Endothelial cell of umbilical vein (primary cell): ENCODE measurements at regions of chr3 and their contacts with region 1.

Region 1: DNA sequence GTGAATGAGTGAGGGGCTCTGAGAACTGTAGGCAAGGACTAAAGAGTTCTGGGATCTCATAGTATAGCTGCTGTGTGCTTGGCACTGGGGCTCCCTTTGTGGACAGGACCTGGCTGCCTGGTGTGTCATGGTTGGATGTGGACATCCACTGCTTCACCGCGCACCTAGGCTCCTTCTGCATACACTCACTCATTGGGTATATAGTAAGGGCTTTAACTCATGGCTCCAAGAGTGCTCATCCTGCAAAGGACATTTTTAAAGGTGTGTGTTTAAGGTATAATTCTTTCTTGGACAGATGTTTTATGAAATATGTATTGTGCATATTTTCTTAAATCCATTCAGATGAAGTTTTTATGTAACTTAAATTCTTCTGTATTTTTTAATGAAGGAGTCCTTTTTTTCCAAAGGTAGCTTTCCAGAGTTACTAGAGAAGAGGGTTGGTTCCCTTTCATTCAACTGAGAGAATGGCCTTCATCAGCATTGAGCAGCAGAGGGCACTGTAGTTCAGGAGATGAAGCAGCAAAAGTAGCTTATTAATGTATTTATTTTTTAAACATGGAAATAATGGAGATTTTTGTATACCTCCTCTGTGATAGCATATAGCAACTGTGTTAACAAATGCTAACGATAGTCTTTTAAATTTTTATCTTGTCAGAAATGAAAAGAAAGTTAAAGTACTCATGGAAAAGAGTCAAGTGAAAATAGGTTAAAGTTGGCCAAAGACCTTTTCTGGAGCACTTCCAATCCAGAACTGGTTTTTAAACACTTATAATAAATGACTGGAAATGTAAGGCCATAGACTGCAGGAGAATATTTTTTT is 25.2 kb downstream of the OXNAD1 start:
- DNase-seq: peak; percentile 70
- H3K4me3 ChIP-seq: no peak overlapping the region
- H3K27ac ChIP-seq: no peak overlapping the region
- H3K4me1 ChIP-seq: peaks cover 2% of the 10 kb centered on the region
- H3K27me3 ChIP-seq: no peaks in the 10 kb centered on the region
- CTCF ChIP-seq: peak; percentile 58 to 60
- POLR2A ChIP-seq: no peak

Region 2: DNA sequence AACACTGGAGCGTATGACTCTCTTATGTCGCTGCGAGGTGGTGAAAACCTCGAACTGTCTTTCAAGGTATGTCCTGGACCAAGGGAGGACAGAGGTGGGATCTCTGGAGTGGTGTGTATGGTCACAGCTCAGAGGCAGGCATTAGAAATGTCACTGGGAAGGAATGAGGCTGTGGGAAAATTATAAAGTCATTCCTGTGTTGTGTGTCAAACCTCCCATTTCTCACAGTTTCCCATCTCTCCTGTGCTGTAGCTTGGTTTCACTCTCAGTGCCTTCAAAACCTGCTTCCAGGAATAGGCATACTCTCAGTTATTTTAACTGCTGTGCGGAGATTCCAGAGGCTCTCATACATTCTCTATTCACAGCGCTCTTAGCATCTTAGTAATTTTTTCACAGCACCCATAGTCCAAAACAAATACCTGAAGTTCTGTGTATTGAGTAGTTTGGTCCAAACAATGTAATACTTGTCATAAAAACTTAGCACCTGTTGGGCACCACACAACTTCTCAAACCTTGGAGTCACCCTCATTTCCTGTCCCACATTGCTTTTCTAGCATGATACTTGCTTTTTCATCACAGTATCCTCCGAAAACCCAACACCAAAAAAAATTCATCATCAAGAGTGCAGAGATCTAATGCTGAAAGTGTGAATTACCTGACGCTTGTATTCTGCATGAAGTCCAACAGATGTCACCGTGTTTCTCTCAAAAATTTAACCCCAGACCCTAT is 78.9 kb before region 1 on chr3:
- CTCF ChIA-PET with region 1: no interaction called
- POLR2A ChIA-PET with region 1: no interaction called
- dilution Hi-C with region 1: no loop called
- intact Hi-C with region 1: no loop called
- DNase-seq: no peak
- H3K4me3 ChIP-seq: no peak overlapping the region
- H3K27ac ChIP-seq: no peak overlapping the region
- H3K4me1 ChIP-seq: peaks cover 12% of the 10 kb centered on the region
- H3K27me3 ChIP-seq: no peaks in the 10 kb centered on the region
- CTCF ChIP-seq: no peak
- POLR2A ChIP-seq: no peak

Region 3: GRCh38 chr3:16264708-16265454 is 25.3 kb before region 1 on chr3 and contains the starts of genes DPH3 and OXNAD1:
- CTCF ChIA-PET with region 1: interaction called, 66 read pairs
- POLR2A ChIA-PET with region 1: no interaction called
- dilution Hi-C with region 1: no loop called
- intact Hi-C with region 1: loop called (anchors 2 kb)
- DNase-seq: peak; percentile 99
- H3K4me3 ChIP-seq: peak within 1 kb of the TSS; percentile 66 to 93 (median 72)
- H3K27ac ChIP-seq: peak within 1 kb of the TSS; percentile 82
- H3K4me1 ChIP-seq: peaks cover 23% of the 10 kb centered on the region
- H3K27me3 ChIP-seq: no peaks in the 10 kb centered on the region
- CTCF ChIP-seq: no peak
- POLR2A ChIP-seq: peak; percentile 82
- total RNA-seq, gene DPH3: 28.7 and 29.6 TPM in 2 replicates
- total RNA-seq, gene OXNAD1: 8.9 and 9.7 TPM in 2 replicates

Region 4: GRCh38 chr3:16300881-16301359 is 10.7 kb after region 1 on chr3:
- CTCF ChIA-PET with region 1: interaction called, 21 read pairs
- POLR2A ChIA-PET with region 1: no interaction called
- dilution Hi-C with region 1: no loop called
- intact Hi-C with region 1: no loop called
- DNase-seq: no peak
- H3K4me3 ChIP-seq: no peak overlapping the region
- H3K27ac ChIP-seq: no peak overlapping the region
- H3K4me1 ChIP-seq: no peaks in the 10 kb centered on the region
- H3K27me3 ChIP-seq: no peaks in the 10 kb centered on the region
- CTCF ChIP-seq: no peak
- POLR2A ChIP-seq: no peak

Region 5: GRCh38 chr3:16319723-16320122 is 29.5 kb after region 1 on chr3:
- CTCF ChIA-PET with region 1: interaction called, 12 read pairs
- POLR2A ChIA-PET with region 1: no interaction called
- dilution Hi-C with region 1: no loop called
- intact Hi-C with region 1: no loop called
- DNase-seq: no peak
- H3K4me3 ChIP-seq: no peak overlapping the region
- H3K27ac ChIP-seq: no peak overlapping the region
- H3K4me1 ChIP-seq: no peaks in the 10 kb centered on the region
- H3K27me3 ChIP-seq: no peaks in the 10 kb centered on the region
- CTCF ChIP-seq: no peak
- POLR2A ChIP-seq: no peak

Region 6: DNA sequence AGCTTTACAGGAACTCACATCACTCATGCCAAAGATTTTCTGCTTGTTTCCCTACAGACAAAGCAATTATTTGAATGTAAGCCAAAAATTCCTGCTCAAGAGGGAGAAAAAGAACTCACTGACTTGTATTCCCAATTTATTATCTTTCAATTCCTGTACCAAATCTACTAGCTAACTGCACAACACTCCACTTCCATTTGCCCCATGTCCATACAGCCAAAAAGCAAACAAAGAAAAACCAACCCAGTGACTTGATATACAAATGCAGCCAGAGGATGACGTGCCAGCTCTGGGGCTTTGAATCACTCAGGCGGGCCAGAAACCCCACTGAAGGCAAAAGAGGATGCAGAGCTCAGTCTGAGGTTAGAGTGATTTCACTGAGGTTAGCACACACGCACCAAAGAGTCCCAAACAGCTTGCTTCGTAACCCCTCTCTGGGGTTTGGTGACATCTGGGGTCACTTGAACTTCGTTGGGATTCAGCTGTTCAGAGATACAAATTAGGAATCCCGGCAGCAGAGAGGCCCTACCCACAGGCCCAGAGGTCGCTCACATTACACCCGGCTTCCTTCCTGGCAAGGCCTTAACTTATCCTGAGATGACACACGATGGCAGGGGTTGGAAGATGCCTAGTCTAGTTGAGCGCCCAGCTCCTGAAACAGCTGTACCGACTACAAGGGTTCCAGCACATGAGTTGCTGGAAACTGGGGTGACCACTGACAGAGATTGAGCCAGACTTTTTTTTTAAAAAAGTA is 221.6 kb after region 1 on chr3:
- CTCF ChIA-PET with region 1: interaction called, 197 read pairs
- POLR2A ChIA-PET with region 1: no interaction called
- dilution Hi-C with region 1: no loop called
- intact Hi-C with region 1: loop called (anchors 1 kb)
- DNase-seq: peak; percentile 83
- H3K4me3 ChIP-seq: peak overlapping the region in 2 of 3 experiments; percentile 78 to 88
- H3K27ac ChIP-seq: peak overlapping the region; percentile 54
- H3K4me1 ChIP-seq: peaks cover 23% of the 10 kb centered on the region
- H3K27me3 ChIP-seq: no peaks in the 10 kb centered on the region
- CTCF ChIP-seq: no peak
- POLR2A ChIP-seq: no peak

Region 7: DNA sequence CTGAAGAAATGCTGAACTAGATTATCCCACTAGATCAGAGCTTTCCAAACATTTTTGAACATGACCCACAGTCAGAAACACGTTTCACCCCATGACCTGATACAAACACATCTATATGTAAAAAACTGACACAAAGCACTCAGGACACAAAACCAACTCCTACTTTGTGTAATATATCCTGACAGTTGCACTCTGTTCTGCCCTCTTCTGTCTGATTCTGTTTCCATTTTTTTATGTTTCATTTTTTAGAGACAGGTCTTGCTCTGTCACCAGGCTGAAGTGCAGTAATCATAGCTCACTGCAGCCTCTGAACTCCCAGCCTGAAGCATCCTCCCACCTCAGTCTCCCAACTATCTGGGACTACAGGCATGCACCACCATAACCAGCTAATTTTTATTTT is 239.0 kb after region 1 on chr3:
- CTCF ChIA-PET with region 1: interaction called, 55 read pairs
- POLR2A ChIA-PET with region 1: no interaction called
- dilution Hi-C with region 1: no loop called
- intact Hi-C with region 1: no loop called
- DNase-seq: no peak
- H3K4me3 ChIP-seq: no peak overlapping the region
- H3K27ac ChIP-seq: no peak overlapping the region
- H3K4me1 ChIP-seq: no peaks in the 10 kb centered on the region
- H3K27me3 ChIP-seq: peaks cover 12 to 19% of the 10 kb centered on the region in 2 experiments
- CTCF ChIP-seq: no peak
- POLR2A ChIP-seq: no peak

Region 8: DNA sequence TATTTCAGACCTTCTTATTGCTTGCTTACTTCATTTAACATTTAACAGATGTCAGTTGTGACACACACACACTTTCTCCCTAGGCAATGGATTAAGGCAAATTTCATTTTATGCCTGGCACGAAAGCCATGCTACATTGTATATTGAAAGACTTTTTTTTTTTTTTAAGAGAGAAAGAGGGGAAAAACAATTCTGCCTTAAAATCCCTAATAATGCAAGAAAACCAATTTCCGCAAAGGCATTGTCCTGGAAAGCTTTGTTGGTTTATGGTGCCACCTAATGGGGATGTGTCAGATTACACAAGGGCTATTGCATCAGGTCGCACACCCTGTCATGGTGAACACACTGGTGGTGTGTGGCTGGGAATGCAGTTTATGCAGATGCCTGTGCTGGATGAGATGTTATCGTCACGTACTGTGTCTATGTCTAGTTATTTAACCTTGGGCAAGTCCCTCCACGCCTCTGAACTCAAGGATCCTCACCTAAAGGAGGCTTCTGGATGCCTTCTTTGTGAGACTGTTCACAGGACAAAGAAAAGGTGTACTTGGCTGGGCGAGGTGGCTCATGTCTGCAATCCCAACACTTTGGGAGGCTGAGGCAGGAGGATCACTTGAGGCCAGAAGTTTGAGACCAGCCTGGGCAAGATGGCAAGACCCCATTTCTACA is 260.6 kb after region 1 on chr3:
- CTCF ChIA-PET with region 1: interaction called, 188 read pairs
- POLR2A ChIA-PET with region 1: no interaction called
- dilution Hi-C with region 1: no loop called
- intact Hi-C with region 1: loop called (anchors 1 kb)
- DNase-seq: peak; percentile 87
- H3K4me3 ChIP-seq: no peak overlapping the region
- H3K27ac ChIP-seq: no peak overlapping the region
- H3K4me1 ChIP-seq: peaks cover 6% of the 10 kb centered on the region
- H3K27me3 ChIP-seq: peaks cover 3 to 4% of the 10 kb centered on the region in 2 experiments
- CTCF ChIP-seq: peak; percentile 72 to 88
- POLR2A ChIP-seq: no peak